Ascending aorta (tissue), 2 donors: ENCODE measurements at regions of chr4 and their contacts with region 1.

Region 1: GRCh38 chr4:124111922-124112321 is 600.6 kb downstream of the ANKRD50 start:
- DNase-seq: no peak
- H3K4me3 ChIP-seq: no peak overlapping the region
- H3K27ac ChIP-seq: no peak overlapping the region
- H3K4me1 ChIP-seq: no peaks in the 10 kb centered on the region
- H3K27me3 ChIP-seq: no peaks in the 10 kb centered on the region
- CTCF ChIP-seq: peak; percentile 43 to 65 (median 52)

Region 2: GRCh38 chr4:123127218-123127617 is 984.7 kb before region 1 on chr4:
- intact Hi-C with region 1: loop called (anchors 5 kb)
- DNase-seq: no peak
- H3K4me3 ChIP-seq: no peak overlapping the region
- H3K27ac ChIP-seq: no peak overlapping the region
- H3K4me1 ChIP-seq: peaks cover 0 to 3% of the 10 kb centered on the region in 2 donors
- H3K27me3 ChIP-seq: no peaks in the 10 kb centered on the region
- CTCF ChIP-seq: peak; percentile 22 to 45 (median 39)

Region 3: GRCh38 chr4:123776254-123776653 is 335.7 kb before region 1 on chr4:
- intact Hi-C with region 1: loop called (anchors 1 kb)
- DNase-seq: no peak
- H3K4me3 ChIP-seq: no peak overlapping the region
- H3K27ac ChIP-seq: no peak overlapping the region
- H3K4me1 ChIP-seq: no peaks in the 10 kb centered on the region
- H3K27me3 ChIP-seq: no peaks in the 10 kb centered on the region
- CTCF ChIP-seq: no peak

Region 4: GRCh38 chr4:124262211-124263179 is 150.6 kb after region 1 on chr4:
- intact Hi-C with region 1: loop called (anchors 10 kb)
- DNase-seq: peak in 1 of 2 donors; percentile 82
- H3K4me3 ChIP-seq: no peak overlapping the region
- H3K27ac ChIP-seq: no peak overlapping the region
- H3K4me1 ChIP-seq: no peaks in the 10 kb centered on the region
- H3K27me3 ChIP-seq: no peaks in the 10 kb centered on the region
- CTCF ChIP-seq: peak; percentile 61 to 86 (median 79)